ENCODE measurements at regions of chr4 and their contacts with region 1.

Region 1: GRCh38 chr4:75973766-75974165 is 17.0 kb downstream of the SDAD1 start:
- DNase-seq: no peak
- ATAC-seq: no peak
- H3K4me3 ChIP-seq: no peak overlapping the region
- H3K4me3 Mint-ChIP-seq: no peak overlapping the region
- H3K27ac ChIP-seq: no peak overlapping the region
- H3K27ac Mint-ChIP-seq: no peak overlapping the region
- H3K4me1 ChIP-seq: no peaks in the 10 kb centered on the region
- H3K4me1 Mint-ChIP-seq: no peaks in the 10 kb centered on the region
- H3K27me3 ChIP-seq: no peaks in the 10 kb centered on the region
- H3K27me3 Mint-ChIP-seq: no peaks in the 10 kb centered on the region

Region 2: DNA sequence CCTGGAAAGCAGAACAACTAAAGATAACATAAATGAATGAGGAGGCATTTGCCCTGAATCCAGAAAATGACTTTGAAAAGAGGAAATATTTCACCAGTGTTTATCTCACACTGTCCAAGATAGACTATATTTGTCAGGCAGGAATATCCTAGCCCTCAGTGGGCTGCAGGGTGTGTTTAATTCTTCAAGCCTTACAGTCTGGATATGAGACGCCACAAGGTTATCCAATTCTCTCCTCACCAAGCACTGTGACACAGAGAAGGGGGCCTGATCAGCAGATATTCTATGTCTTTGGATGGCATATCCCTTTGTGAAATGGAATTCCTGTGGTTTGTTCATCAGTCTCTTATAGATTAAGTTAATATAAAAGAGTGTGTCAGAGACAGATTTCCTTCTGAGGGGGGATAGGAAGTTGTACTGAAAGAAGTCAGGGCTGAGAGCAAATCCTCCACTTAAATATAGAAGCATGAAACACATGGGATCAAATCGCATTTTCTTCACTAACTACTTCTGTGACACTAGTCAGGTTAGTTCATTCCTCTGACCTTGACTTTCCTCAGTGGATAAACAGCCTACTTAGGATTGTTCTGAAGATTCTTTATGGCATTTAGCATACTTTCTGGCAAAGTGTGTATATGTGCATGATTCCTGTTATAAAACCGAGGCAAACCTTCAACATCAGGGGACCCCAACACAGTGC is 293.7 kb before region 1 on chr4:
- CTCF ChIA-PET with region 1: no interaction called
- POLR2A ChIA-PET with region 1: no interaction called
- DNase-seq: no peak
- ATAC-seq: no peak
- H3K4me3 ChIP-seq: no peak overlapping the region
- H3K4me3 Mint-ChIP-seq: no peak overlapping the region
- H3K27ac ChIP-seq: no peak overlapping the region
- H3K27ac Mint-ChIP-seq: no peak overlapping the region
- H3K4me1 ChIP-seq: peaks cover 8 to 11% of the 10 kb centered on the region in 2 experiments
- H3K4me1 Mint-ChIP-seq: peaks cover 14 to 16% (median 14%) of the 10 kb centered on the region in 3 donors
- H3K27me3 ChIP-seq: no peaks in the 10 kb centered on the region
- H3K27me3 Mint-ChIP-seq: no peaks in the 10 kb centered on the region

Region 3: GRCh38 chr4:76226418-76226817 is 252.7 kb after region 1 on chr4:
- CTCF ChIA-PET with region 1: no interaction called
- POLR2A ChIA-PET with region 1: no interaction called
- DNase-seq: no peak
- ATAC-seq: no peak
- H3K4me3 ChIP-seq: no peak overlapping the region
- H3K4me3 Mint-ChIP-seq: no peak overlapping the region
- H3K27ac ChIP-seq: no peak overlapping the region
- H3K27ac Mint-ChIP-seq: no peak overlapping the region
- H3K4me1 ChIP-seq: no peaks in the 10 kb centered on the region
- H3K4me1 Mint-ChIP-seq: no peaks in the 10 kb centered on the region
- H3K27me3 ChIP-seq: peaks cover 0 to 15% of the 10 kb centered on the region in 2 experiments
- H3K27me3 Mint-ChIP-seq: peaks cover 7 to 15% of the 10 kb centered on the region in 2 donors

Region 4: DNA sequence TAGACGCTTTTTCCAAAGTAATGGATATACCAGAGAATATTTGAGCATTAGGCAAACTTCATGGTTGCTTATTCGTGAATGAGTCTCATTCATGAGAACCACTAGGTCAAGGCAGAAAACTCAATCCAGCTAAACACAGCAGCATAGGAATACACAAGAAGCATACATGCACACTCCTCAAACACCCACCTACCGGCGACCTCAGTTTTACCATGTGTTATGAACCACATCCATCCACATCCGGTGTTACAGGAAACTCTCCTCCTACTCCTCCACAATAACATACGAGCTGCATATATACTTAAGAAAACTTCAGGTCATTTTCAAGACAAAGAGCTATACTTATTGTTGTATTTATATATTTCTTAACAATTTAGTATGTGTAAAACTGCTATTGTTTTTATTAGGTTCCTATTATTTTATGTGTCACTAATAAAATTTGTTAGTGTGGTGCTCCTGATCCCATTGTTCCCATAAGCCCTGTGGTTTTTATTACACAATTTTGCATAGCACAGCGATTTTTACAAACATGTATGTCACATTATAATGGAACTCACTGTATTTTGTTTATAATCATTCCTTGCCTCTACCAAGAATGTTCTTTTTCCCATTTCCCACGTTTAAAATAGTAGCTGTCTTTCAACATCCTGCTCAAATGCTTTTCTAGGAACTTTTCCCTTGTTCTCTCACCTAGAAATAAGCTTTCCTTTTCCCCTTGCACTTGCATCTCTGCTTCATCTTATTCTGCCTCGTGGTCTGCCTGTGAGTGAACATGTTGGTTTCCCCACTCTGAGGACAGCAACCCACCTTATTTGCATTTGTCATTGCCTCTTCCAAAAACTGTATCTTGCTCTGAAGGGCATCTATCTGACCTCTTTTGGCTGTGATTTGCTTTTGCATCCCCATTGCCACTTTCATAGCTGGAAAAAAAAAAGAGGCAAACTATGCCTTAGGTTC is 381.0 kb after region 1 on chr4:
- CTCF ChIA-PET with region 1: no interaction called
- POLR2A ChIA-PET with region 1: interaction called in 1 of 2 experiments, 15 read pairs
- DNase-seq: peak in 27 of 35 experiments; percentile 2 to 58 (median 18)
- ATAC-seq: peak; percentile 63 to 98 (median 75)
- H3K4me3 ChIP-seq: no peak overlapping the region
- H3K4me3 Mint-ChIP-seq: peak overlapping the region in 1 of 3 donors; percentile 8
- H3K27ac ChIP-seq: no peak overlapping the region
- H3K27ac Mint-ChIP-seq: peak overlapping the region in 1 of 2 donors; percentile 62
- H3K4me1 ChIP-seq: peaks cover 4 to 8% of the 10 kb centered on the region in 2 experiments
- H3K4me1 Mint-ChIP-seq: peaks cover 13 to 15% (median 15%) of the 10 kb centered on the region in 3 donors
- H3K27me3 ChIP-seq: no peaks in the 10 kb centered on the region
- H3K27me3 Mint-ChIP-seq: peaks cover 0 to 4% of the 10 kb centered on the region in 2 donors

Measured in T-cell (primary cell).